ENCODE measurements at regions of chr19 and their contacts with region 1.

Region 1: DNA sequence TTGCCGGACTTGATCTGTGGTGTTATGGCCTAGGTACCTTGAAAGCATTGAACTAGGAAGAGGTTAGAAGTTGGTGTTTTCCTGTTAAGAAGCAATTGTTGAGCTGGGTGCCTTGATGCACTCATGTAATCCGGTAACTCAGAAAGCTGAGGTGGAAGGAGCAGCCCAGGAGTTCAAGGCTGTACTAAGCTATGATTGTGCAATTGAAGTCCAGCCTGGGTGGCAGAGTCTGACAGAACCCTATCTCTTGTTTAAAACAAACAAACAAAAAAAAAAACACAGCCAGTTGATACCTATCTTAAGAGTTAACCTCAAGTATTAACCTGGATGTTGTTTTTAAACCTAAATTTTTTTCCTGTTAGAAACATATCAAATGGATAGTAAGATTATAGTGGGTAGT is 19.3 kb downstream of the SAFB start:
- DNase-seq: no peak
- ATAC-seq: peak in 2 of 4 donors; percentile 42
- H3K4me3 ChIP-seq: no peak overlapping the region
- H3K27ac ChIP-seq: no peak overlapping the region
- H3K4me1 ChIP-seq: peaks cover 16% of the 10 kb centered on the region
- H3K27me3 ChIP-seq: no peaks in the 10 kb centered on the region
- CTCF ChIP-seq: no peak

Region 2: GRCh38 chr19:5679289-5680082 is 37.3 kb after region 1 on chr19:
- intact Hi-C with region 1: loop called in 1 of 2 experiments (anchors 5 kb)
- DNase-seq: no peak
- ATAC-seq: no peak
- H3K4me3 ChIP-seq: peak overlapping the region; percentile 83
- H3K27ac ChIP-seq: peak overlapping the region; percentile 95
- H3K4me1 ChIP-seq: peaks cover 17% of the 10 kb centered on the region
- H3K27me3 ChIP-seq: no peaks in the 10 kb centered on the region
- CTCF ChIP-seq: no peak

Region 3: DNA sequence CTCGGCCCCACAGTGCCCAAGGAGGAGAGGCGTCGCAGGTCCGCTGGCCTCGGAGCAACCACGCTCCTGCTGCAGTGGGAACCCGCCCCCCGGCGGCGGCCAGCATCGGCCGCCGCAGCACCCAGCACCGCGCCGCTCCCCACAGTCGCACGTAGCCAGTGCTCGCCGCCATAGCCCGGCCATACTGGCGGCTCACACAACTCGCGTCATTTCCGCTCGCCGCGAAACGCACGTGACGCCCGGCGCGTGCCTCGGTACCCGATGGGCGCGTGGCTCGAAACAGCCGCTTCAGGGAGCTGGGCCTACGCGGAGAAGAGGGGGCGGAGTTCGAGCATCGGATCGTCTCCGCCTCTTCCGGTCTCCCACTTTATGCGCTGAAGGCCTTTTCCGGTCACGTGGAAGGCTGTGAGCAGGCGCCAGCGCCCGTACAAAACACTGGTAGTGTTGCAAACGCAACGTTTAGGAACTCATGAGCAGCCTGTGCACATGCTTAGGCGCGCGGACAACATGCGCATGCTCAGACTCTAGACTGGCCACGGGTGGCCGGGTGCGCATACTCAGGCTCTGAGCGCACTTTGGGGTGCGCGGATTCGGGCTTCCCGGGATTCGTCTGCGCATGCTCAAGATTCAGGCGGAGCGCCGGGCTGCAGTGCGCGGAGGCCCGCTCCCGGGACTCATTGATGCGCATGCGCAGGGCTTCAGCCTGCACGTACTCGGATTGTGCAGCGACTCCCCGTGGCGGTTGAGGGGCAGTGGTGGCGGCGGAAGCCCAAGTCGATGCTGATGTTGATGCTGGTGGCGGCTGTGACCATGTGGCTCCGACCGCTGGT is 78.0 kb after region 1 on chr19 and contains the starts of genes CATSPERD and LONP1:
- intact Hi-C with region 1: no loop called
- DNase-seq: peak; percentile 99
- ATAC-seq: peak; percentile 96 to 97 (median 96)
- H3K4me3 ChIP-seq: peak within 1 kb of the TSS; percentile 95
- H3K27ac ChIP-seq: peak within 1 kb of the TSS; percentile 99
- H3K4me1 ChIP-seq: peaks cover 20% of the 10 kb centered on the region
- H3K27me3 ChIP-seq: peaks cover 0 to 3% (median 0%) of the 10 kb centered on the region in 3 donors
- CTCF ChIP-seq: peak; percentile 88
- total RNA-seq, gene CATSPERD: not detected
- total RNA-seq, gene LONP1: 61.0 to 97.1 (median 73.8) TPM

Measured in psoas muscle (tissue), 8 donors.